ENCODE measurements at regions of chr6 and their contacts with region 1.

Region 1: GRCh38 chr6:135117413-135117968 is 62.9 kb upstream of the HBS1L start:
- DNase-seq: no peak
- H3K4me3 ChIP-seq: no peak overlapping the region
- H3K27ac ChIP-seq: no peak overlapping the region
- H3K4me1 ChIP-seq: peaks cover 14% of the 10 kb centered on the region
- CTCF ChIP-seq: no peak

Region 2: GRCh38 chr6:134979142-134979541 is 138.3 kb before region 1 on chr6:
- CTCF ChIA-PET with region 1: no interaction called
- POLR2A ChIA-PET with region 1: no interaction called
- intact Hi-C with region 1: no loop called
- DNase-seq: no peak
- H3K4me3 ChIP-seq: no peak overlapping the region
- H3K27ac ChIP-seq: no peak overlapping the region
- H3K4me1 ChIP-seq: no peaks in the 10 kb centered on the region
- CTCF ChIP-seq: no peak

Region 3: DNA sequence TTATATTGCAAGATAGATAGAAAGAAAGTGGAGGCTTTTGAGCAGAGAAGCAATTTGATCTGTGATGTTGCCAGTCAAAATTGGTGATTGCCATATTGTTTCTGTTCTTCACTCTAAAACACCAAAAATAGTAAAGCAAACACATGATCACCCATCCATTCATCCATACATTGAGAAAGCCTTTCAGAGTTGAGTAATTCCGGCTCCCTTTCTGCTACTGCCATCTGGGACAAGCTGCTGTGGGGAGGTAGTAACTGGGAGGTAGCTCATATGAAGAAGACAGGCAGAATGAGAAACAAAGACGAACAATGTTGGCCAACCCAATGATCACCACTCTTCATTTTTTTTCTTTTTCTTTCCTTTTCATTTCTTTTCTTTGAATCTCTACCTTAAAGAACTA is 11.8 kb before region 1 on chr6:
- CTCF ChIA-PET with region 1: no interaction called
- POLR2A ChIA-PET with region 1: interaction called, 11 read pairs
- intact Hi-C with region 1: no loop called
- DNase-seq: peak; percentile 15
- H3K4me3 ChIP-seq: no peak overlapping the region
- H3K27ac ChIP-seq: no peak overlapping the region
- H3K4me1 ChIP-seq: peaks cover 45% of the 10 kb centered on the region
- CTCF ChIP-seq: no peak

Region 4: DNA sequence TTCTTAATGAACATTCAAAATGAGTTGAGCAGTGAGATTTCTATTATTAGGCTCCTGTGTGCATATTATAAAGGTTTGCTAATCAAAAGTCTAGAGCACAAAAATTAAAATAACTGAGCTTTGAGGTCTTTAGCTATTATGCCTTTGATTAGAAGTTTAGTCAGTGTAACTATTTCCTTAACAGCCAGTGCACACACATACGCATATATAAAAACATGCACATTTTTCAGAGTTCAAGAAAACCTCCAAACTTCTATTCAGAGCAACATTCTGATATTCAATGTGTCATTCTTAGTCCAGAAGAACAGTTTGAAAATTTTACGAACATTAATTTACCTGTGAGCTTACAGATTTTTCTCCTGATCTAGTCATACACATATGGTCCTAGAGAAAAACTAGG is 15.3 kb after region 1 on chr6:
- CTCF ChIA-PET with region 1: interaction called, 3 read pairs
- POLR2A ChIA-PET with region 1: interaction called, 23 read pairs
- intact Hi-C with region 1: no loop called
- DNase-seq: no peak
- H3K4me3 ChIP-seq: no peak overlapping the region
- H3K27ac ChIP-seq: no peak overlapping the region
- H3K4me1 ChIP-seq: peaks cover 12% of the 10 kb centered on the region
- CTCF ChIP-seq: no peak